ENCODE measurements at regions of chr20 and their contacts with region 1.

Region 1: GRCh38 chr20:33992923-33993575 is 662 bp upstream of the RALY start:
- DNase-seq: peak; percentile 96 to 100 (median 99)
- ATAC-seq: peak; percentile 79 to 84 (median 80)
- H3K4me3 ChIP-seq: peak overlapping the region; percentile 90 to 99
- H3K4me3 Mint-ChIP-seq: peak overlapping the region; percentile 93 to 97 (median 93)
- H3K27ac ChIP-seq: peak overlapping the region; percentile 86
- H3K27ac Mint-ChIP-seq: peak overlapping the region; percentile 97 to 99
- H3K4me1 ChIP-seq: peaks cover 30 to 38% of the 10 kb centered on the region in 2 experiments
- H3K4me1 Mint-ChIP-seq: peaks cover 59 to 64% (median 60%) of the 10 kb centered on the region in 3 donors
- H3K27me3 ChIP-seq: no peaks in the 10 kb centered on the region
- H3K27me3 Mint-ChIP-seq: no peaks in the 10 kb centered on the region

Region 2: GRCh38 chr20:34004227-34004626 is 11.2 kb after region 1 on chr20:
- CTCF ChIA-PET with region 1: interaction called, 3 read pairs
- POLR2A ChIA-PET with region 1: interaction called in 1 of 2 experiments, 18 read pairs
- DNase-seq: no peak
- ATAC-seq: no peak
- H3K4me3 ChIP-seq: no peak overlapping the region
- H3K4me3 Mint-ChIP-seq: peak overlapping the region in 1 of 3 donors; percentile 4
- H3K27ac ChIP-seq: no peak overlapping the region
- H3K27ac Mint-ChIP-seq: no peak overlapping the region
- H3K4me1 ChIP-seq: peaks cover 19 to 33% of the 10 kb centered on the region in 2 experiments
- H3K4me1 Mint-ChIP-seq: peaks cover 91 to 94% (median 92%) of the 10 kb centered on the region in 3 donors
- H3K27me3 ChIP-seq: no peaks in the 10 kb centered on the region
- H3K27me3 Mint-ChIP-seq: no peaks in the 10 kb centered on the region

Region 3: DNA sequence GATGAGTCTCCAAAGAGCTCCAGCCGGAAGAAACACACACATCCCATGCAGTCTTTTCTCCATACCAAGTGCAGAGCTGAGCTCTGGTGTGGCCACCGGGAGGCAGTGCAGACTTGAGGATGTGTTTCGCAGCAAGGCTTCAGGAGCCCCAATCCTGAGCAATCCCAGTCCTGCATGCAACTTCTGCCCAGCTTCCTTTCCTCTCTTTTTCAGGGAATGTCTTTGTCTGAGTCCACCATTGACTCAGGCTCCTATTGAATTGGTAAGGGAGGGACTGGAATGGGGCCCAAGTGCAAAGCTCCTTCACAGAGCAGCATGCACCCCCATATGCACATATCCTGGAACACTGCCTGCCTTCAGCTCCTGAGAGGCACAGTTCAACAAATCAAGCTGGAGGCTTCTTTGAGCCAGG is 197.6 kb after region 1 on chr20:
- CTCF ChIA-PET with region 1: no interaction called
- POLR2A ChIA-PET with region 1: no interaction called
- DNase-seq: peak in 17 of 35 experiments; percentile 1 to 51 (median 14)
- ATAC-seq: peak in 2 of 4 experiments; percentile 50 to 63
- H3K4me3 ChIP-seq: no peak overlapping the region
- H3K4me3 Mint-ChIP-seq: no peak overlapping the region
- H3K27ac ChIP-seq: no peak overlapping the region
- H3K27ac Mint-ChIP-seq: no peak overlapping the region
- H3K4me1 ChIP-seq: no peaks in the 10 kb centered on the region
- H3K4me1 Mint-ChIP-seq: peaks cover 0 to 3% (median 0%) of the 10 kb centered on the region in 3 donors
- H3K27me3 ChIP-seq: peaks cover 0 to 10% of the 10 kb centered on the region in 2 experiments
- H3K27me3 Mint-ChIP-seq: peaks cover 15 to 34% of the 10 kb centered on the region in 2 donors

Region 4: DNA sequence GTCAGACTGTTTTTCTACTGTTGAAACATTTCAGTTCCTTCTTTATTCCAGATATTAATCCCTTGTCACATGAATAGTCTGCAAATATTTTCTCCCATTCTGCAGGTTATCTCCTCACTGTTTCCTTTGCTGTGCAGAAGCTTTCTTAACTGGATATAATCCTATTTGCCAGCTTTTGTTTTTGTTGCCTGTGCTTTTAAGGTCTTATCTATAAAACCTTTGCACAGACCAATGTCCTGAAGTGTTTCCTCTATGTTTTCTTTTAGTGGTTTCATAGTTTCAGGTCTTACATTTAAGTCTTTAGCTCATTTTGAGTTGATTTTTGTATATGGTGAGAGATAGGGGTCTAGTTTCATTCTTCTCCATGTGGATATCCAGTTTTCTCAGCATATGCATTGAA is 813.2 kb after region 1 on chr20:
- CTCF ChIA-PET with region 1: no interaction called
- POLR2A ChIA-PET with region 1: no interaction called
- DNase-seq: no peak
- ATAC-seq: no peak
- H3K4me3 ChIP-seq: no peak overlapping the region
- H3K4me3 Mint-ChIP-seq: no peak overlapping the region
- H3K27ac ChIP-seq: no peak overlapping the region
- H3K27ac Mint-ChIP-seq: no peak overlapping the region
- H3K4me1 ChIP-seq: no peaks in the 10 kb centered on the region
- H3K4me1 Mint-ChIP-seq: peaks cover 31 to 36% (median 34%) of the 10 kb centered on the region in 3 donors
- H3K27me3 ChIP-seq: no peaks in the 10 kb centered on the region
- H3K27me3 Mint-ChIP-seq: no peaks in the 10 kb centered on the region

Measured in T-cell (primary cell).